ENCODE measurements at regions of chr4 and their contacts with region 1.

Region 1: GRCh38 chr4:6885951-6886557 is 23.6 kb upstream of the TBC1D14 start:
- DNase-seq: no peak
- H3K4me3 ChIP-seq: no peak overlapping the region
- H3K27me3 ChIP-seq: no peaks in the 10 kb centered on the region
- CTCF ChIP-seq: no peak; the same call in 1 of the 2 replicates

Region 2: GRCh38 chr4:6716018-6716911 is 169.8 kb before region 1 on chr4 and contains the start of gene BLOC1S4:
- CTCF ChIA-PET with region 1: interaction called, 19 read pairs
- POLR2A ChIA-PET with region 1: no interaction called
- DNase-seq: peak; percentile 43
- H3K4me3 ChIP-seq: peak within 1 kb of the TSS; percentile 92
- H3K27me3 ChIP-seq: no peaks in the 10 kb centered on the region
- CTCF ChIP-seq: peak; percentile 9; the same call in 1 of the 2 replicates
- polyA plus RNA-seq, gene BLOC1S4: 10.4 and 12.6 TPM in 2 replicates

Region 3: DNA sequence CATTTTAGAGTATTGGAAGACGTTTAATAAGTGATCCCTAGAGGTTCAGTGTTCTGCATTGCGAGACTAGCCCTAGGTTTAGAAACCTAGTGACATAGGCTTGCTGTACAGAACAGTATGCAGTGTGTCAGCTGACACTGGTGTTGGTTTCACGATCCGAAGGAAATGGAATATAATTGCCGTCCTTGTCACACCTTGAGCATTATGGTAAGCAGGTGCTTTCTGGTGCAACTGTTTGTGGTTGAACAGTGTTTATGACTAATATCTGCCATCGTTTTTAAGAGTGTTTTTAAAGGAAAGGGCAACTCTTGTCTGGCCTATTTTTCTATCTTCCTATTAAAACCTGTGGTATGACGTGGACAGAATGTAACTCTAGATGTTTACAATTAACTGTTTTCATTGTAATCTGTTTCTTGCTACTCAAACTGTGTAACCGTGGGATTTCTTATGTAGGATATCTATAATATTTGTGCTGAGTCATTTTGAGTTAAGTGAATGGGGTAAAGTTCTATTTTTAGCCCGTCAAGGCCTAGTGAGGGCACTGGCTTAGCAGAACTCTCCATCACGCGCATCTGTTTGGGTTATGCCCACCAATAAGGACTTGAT is 30.3 kb before region 1 on chr4:
- CTCF ChIA-PET with region 1: no interaction called
- POLR2A ChIA-PET with region 1: no interaction called
- DNase-seq: peak; percentile 35
- H3K4me3 ChIP-seq: no peak overlapping the region
- H3K27me3 ChIP-seq: no peaks in the 10 kb centered on the region
- CTCF ChIP-seq: no peak

Region 4: GRCh38 chr4:6917461-6918271 is 31.6 kb after region 1 on chr4:
- CTCF ChIA-PET with region 1: no interaction called
- POLR2A ChIA-PET with region 1: no interaction called
- DNase-seq: no peak
- H3K4me3 ChIP-seq: no peak overlapping the region
- H3K27me3 ChIP-seq: no peaks in the 10 kb centered on the region
- CTCF ChIP-seq: peak; percentile 41